ENCODE measurements at regions of chr21 and their contacts with region 1.

Region 1: DNA sequence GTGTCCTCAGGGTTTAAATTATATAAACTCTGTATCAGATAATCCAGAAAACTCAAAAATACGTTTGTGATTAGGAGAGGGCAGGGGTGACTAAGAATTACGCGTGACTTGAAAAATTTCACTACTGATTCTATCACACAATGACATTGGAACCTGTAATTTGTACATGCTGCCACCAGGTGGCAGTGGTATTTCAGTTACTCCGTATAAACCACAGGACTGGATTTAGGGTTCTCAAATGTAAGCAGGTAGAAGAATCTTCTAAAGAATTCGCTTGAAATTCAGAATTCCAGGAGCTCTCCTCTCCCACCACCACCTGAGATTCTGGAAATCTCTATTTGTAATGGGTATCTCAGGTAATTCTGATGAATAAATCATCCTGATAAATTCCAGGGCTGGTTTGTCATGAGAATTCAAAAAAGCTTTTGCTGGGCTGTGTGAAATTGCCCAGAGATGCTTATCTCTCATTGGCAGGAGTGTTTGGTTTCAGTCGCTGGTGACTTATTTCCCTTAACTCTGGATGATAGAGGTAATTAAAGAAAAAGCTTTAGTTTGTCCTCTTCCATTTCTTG is 1.7 kb upstream of the KRTAP7-1 start:
- DNase-seq: peak; percentile 78
- H3K4me3 Mint-ChIP-seq: no peak overlapping the region
- H3K27ac Mint-ChIP-seq: no peak overlapping the region
- H3K4me1 Mint-ChIP-seq: no peaks in the 10 kb centered on the region
- H3K27me3 Mint-ChIP-seq: peaks cover 7% of the 10 kb centered on the region

Region 2: DNA sequence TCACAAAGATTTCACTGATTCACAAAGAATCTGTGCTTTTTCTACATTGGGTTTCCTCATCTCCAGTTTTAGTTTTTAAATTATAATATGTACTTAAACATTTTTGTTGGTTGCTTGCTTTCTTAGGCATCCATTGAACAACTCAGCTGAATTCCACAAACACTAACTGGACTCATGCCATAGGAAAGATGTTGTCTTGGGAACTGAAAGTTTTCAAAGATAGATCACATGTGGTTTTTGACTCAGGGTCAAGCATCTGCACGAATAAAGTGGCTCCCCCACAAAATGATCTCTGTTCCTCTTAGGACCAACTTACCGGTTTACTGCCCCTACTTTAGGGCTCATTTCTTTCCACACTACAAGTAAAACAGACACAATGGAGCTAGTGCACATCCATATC is 73.0 kb before region 1 on chr21:
- intact Hi-C with region 1: no loop called
- DNase-seq: no peak
- H3K4me3 Mint-ChIP-seq: no peak overlapping the region
- H3K27ac Mint-ChIP-seq: no peak overlapping the region
- H3K4me1 Mint-ChIP-seq: no peaks in the 10 kb centered on the region
- H3K27me3 Mint-ChIP-seq: peaks cover 4% of the 10 kb centered on the region

Region 3: GRCh38 chr21:31604591-31605190 is 773.4 kb after region 1 on chr21:
- intact Hi-C with region 1: loop called (anchors 10 kb)
- DNase-seq: peak; percentile 90
- H3K4me3 Mint-ChIP-seq: no peak overlapping the region
- H3K27ac Mint-ChIP-seq: no peak overlapping the region
- H3K4me1 Mint-ChIP-seq: peaks cover 3% of the 10 kb centered on the region
- H3K27me3 Mint-ChIP-seq: no peaks in the 10 kb centered on the region

Measured in activated CD4-positive, alpha-beta T cell treated with anti-CD3 and anti-CD28 coated beads, Interleukin-2, amount 10 ng/mL, durations not matched to agents 24 days and 14 days (primary cell).